GM12878 (cell line): ENCODE measurements at regions of chr4 and their contacts with region 1.

Region 1: GRCh38 chr4:109294006-109294405 is 8.5 kb downstream of the COL25A1 start:
- DNase-seq: no peak
- ATAC-seq: peak; percentile 98
- H3K4me3 ChIP-seq: no peak overlapping the region
- H3K27ac ChIP-seq: no peak overlapping the region
- H3K4me1 ChIP-seq: no peaks in the 10 kb centered on the region
- H3K27me3 ChIP-seq: no peaks in the 10 kb centered on the region
- CTCF ChIP-seq: peak; percentile 63 to 76 (median 75)
- EP300 ChIP-seq: no peak
- POLR2A ChIP-seq: no peak
- RAD21 ChIP-seq: peak; percentile 39

Region 2: DNA sequence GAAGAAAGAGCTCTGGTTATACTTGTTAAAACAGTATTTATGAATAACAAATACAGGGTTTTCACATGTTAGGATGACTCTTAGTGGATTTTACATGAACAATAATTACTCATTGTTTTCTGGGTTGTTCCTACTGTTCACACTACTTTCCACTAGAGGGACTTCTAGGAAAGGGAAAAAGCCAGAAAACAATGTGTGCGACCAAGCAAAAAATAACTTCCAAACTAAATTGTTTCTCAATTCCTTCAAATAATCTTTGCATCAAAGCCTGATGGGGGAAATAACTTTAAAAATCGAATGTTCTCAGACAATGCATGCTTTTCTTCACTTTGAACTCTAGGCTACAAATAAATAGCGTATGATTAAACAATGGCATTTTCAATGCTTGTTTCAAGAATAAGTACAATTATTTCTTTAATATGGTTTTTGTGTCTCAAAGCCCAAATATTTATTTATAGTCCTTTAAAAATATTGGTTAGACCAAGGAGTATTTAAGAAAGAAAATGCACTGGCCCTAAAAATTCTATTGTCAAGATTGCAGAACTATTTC is 459.1 kb before region 1 on chr4:
- CTCF ChIA-PET with region 1: interaction called, 9 read pairs
- POLR2A ChIA-PET with region 1: no interaction called
- RAD21 ChIA-PET with region 1: interaction called, 7 read pairs
- SMC1A ChIA-PET with region 1: interaction called, 5 read pairs
- in situ Hi-C with region 1: no loop called
- intact Hi-C with region 1: loop called (anchors 10 kb)
- DNase-seq: no peak
- ATAC-seq: peak; percentile 48; the same call in 1 of the 3 replicates
- H3K4me3 ChIP-seq: no peak overlapping the region
- H3K27ac ChIP-seq: no peak overlapping the region
- H3K4me1 ChIP-seq: no peaks in the 10 kb centered on the region
- H3K27me3 ChIP-seq: no peaks in the 10 kb centered on the region
- CTCF ChIP-seq: peak; percentile 33 to 54 (median 51); a peak in 5 of 6 replicates
- EP300 ChIP-seq: no peak
- POLR2A ChIP-seq: no peak
- RAD21 ChIP-seq: peak; percentile 66

Region 3: DNA sequence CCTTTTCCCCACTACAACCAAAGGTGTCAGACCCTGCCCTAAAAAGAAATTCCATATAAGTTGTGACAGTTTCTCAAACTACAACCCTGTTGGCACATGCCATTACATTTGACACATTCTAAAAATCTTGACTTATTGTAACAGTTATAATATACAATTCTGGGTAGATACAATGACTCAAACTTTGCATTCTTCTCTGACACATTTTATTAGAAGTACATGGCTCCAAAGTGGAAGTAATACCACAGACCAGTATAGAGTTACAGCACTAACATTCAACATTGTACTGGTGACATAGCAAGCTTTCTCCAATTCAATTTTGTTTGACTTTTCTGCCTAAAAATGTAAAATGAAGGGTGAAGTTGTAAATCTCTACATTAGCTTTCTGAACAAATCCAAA is 334.5 kb before region 1 on chr4:
- CTCF ChIA-PET with region 1: no interaction called
- POLR2A ChIA-PET with region 1: no interaction called
- RAD21 ChIA-PET with region 1: no interaction called
- SMC1A ChIA-PET with region 1: no interaction called
- in situ Hi-C with region 1: no loop called
- intact Hi-C with region 1: no loop called
- DNase-seq: no peak
- ATAC-seq: no peak
- H3K4me3 ChIP-seq: no peak overlapping the region
- H3K27ac ChIP-seq: no peak overlapping the region
- H3K4me1 ChIP-seq: no peaks in the 10 kb centered on the region
- H3K27me3 ChIP-seq: no peaks in the 10 kb centered on the region; a peak in 1 of 4 replicates
- CTCF ChIP-seq: no peak
- EP300 ChIP-seq: no peak
- POLR2A ChIP-seq: no peak
- RAD21 ChIP-seq: no peak

Region 4: DNA sequence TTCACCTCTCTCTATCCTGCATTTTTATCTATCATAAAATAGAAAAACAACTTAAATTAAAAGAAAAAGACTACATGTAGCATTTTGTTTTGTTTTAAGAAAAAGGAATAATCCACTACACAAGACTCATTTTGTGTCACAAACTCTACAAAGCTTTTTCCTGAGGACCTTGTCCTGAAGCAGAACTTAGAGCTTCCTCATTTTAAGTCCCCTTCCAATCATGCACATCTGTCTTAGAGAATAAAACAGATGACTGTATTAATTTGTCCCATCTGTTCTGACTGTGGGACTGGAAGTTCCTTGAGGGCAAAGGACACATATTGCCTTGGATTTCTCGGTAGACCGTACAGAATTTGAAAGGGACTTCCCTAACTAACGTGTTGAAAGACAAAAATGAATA is 210.1 kb before region 1 on chr4:
- CTCF ChIA-PET with region 1: interaction called, 88 read pairs
- POLR2A ChIA-PET with region 1: no interaction called
- RAD21 ChIA-PET with region 1: interaction called, 7 read pairs
- SMC1A ChIA-PET with region 1: interaction called, 9 read pairs
- in situ Hi-C with region 1: no loop called
- intact Hi-C with region 1: loop called (anchors 5 kb)
- DNase-seq: no peak
- ATAC-seq: no peak
- H3K4me3 ChIP-seq: no peak overlapping the region
- H3K27ac ChIP-seq: no peak overlapping the region
- H3K4me1 ChIP-seq: no peaks in the 10 kb centered on the region
- H3K27me3 ChIP-seq: no peaks in the 10 kb centered on the region
- CTCF ChIP-seq: no peak
- EP300 ChIP-seq: no peak
- POLR2A ChIP-seq: no peak
- RAD21 ChIP-seq: no peak

Region 5: DNA sequence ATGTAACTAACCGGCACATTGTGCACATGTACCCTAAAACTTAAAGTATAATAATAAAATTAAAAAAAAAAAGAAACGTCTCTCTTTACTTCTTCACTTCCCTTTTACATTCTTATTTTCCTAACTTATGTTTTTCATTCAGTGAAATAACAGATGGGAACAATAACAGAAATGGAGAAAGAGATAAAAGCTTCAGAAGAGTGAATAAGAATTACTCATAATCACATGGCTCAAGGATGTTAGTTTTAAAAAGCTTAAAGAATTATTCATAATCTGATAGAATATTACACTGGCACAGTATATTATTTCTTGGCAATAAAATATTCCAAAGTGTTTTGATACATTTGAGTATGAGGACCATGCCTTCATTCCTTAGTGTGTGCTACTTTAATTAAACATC is 167.2 kb before region 1 on chr4:
- CTCF ChIA-PET with region 1: interaction called, 8 read pairs
- POLR2A ChIA-PET with region 1: no interaction called
- RAD21 ChIA-PET with region 1: interaction called, 5 read pairs
- SMC1A ChIA-PET with region 1: interaction called, 13 read pairs
- in situ Hi-C with region 1: no loop called
- intact Hi-C with region 1: no loop called
- DNase-seq: no peak
- ATAC-seq: no peak
- H3K4me3 ChIP-seq: no peak overlapping the region
- H3K27ac ChIP-seq: no peak overlapping the region
- H3K4me1 ChIP-seq: no peaks in the 10 kb centered on the region
- H3K27me3 ChIP-seq: no peaks in the 10 kb centered on the region
- CTCF ChIP-seq: no peak
- EP300 ChIP-seq: no peak
- POLR2A ChIP-seq: no peak
- RAD21 ChIP-seq: no peak

Region 6: DNA sequence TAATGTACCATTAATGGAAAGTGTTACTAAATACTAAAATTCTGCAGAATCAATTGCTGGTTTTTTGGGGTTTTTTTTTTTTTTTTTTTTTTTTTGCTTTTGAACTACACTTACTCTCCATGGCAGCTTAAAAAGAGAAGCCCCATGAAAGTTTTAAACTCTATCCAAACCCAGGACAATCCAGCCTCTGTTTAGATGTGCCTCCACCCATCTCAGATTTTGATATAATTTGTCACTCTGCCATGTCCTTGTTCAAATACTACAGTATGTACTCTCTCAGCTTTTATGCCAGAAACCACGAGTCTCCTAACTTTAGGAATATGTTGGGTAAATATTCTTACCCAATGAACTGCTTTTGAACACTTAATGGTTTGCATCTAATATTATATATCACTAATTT is 75.7 kb before region 1 on chr4:
- CTCF ChIA-PET with region 1: interaction called, 12 read pairs
- POLR2A ChIA-PET with region 1: no interaction called
- RAD21 ChIA-PET with region 1: interaction called, 6 read pairs
- SMC1A ChIA-PET with region 1: interaction called, 13 read pairs
- in situ Hi-C with region 1: no loop called
- intact Hi-C with region 1: no loop called
- DNase-seq: no peak
- ATAC-seq: no peak
- H3K4me3 ChIP-seq: no peak overlapping the region
- H3K27ac ChIP-seq: no peak overlapping the region
- H3K4me1 ChIP-seq: no peaks in the 10 kb centered on the region
- H3K27me3 ChIP-seq: no peaks in the 10 kb centered on the region
- CTCF ChIP-seq: no peak
- EP300 ChIP-seq: no peak
- POLR2A ChIP-seq: no peak
- RAD21 ChIP-seq: no peak

Region 7: GRCh38 chr4:109263721-109264120 is 30.3 kb before region 1 on chr4:
- CTCF ChIA-PET with region 1: interaction called, 6 read pairs
- POLR2A ChIA-PET with region 1: no interaction called
- RAD21 ChIA-PET with region 1: interaction called, 30 read pairs
- SMC1A ChIA-PET with region 1: interaction called, 19 read pairs
- in situ Hi-C with region 1: no loop called
- intact Hi-C with region 1: no loop called
- DNase-seq: no peak
- ATAC-seq: no peak
- H3K4me3 ChIP-seq: no peak overlapping the region
- H3K27ac ChIP-seq: no peak overlapping the region
- H3K4me1 ChIP-seq: no peaks in the 10 kb centered on the region
- H3K27me3 ChIP-seq: no peaks in the 10 kb centered on the region
- CTCF ChIP-seq: no peak
- EP300 ChIP-seq: no peak
- POLR2A ChIP-seq: no peak
- RAD21 ChIP-seq: no peak

Region 8: DNA sequence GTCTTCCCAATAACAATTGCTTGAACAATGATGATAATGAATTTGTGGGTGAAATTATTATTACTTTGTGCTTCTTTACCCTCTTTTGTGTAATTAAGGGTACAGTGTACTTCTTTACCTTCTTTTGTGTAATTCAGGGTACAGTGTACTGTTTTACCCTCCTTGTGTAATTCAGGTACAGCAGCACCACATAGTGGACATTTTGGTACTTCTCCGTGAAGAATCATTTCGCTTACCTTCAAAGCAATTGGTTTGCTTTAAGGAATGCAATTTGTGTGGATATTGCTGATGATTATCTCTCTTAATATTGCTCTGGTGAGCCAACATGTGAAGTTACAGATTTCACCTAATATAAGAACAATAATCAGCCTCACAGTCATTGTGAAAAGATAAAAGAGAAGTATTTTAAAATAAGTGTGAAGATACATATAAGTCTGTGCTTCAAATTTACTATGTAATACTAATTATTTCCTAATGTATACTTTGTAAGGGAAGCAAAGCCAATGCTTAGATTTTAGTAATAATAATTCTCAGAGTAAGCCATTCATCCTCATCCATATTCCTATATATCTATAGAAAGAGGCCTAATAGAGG is 112.4 kb after region 1 on chr4:
- CTCF ChIA-PET with region 1: interaction called, 4 read pairs
- POLR2A ChIA-PET with region 1: no interaction called
- RAD21 ChIA-PET with region 1: interaction called, 3 read pairs
- SMC1A ChIA-PET with region 1: interaction called, 5 read pairs
- in situ Hi-C with region 1: no loop called
- intact Hi-C with region 1: loop called (anchors 5 kb)
- DNase-seq: no peak
- ATAC-seq: peak; percentile 94
- H3K4me3 ChIP-seq: no peak overlapping the region
- H3K27ac ChIP-seq: no peak overlapping the region
- H3K4me1 ChIP-seq: no peaks in the 10 kb centered on the region
- H3K27me3 ChIP-seq: peaks cover 0 to 3% of the 10 kb centered on the region in 2 experiments; a peak in 1 of 4 replicates
- CTCF ChIP-seq: peak; percentile 59 to 76 (median 72); a peak in 5 of 6 replicates
- EP300 ChIP-seq: no peak
- POLR2A ChIP-seq: no peak
- RAD21 ChIP-seq: peak; percentile 82